T-cell (primary cell): ENCODE measurements at regions of chr1 and their contacts with region 1.

Region 1: GRCh38 chr1:38012363-38013226 is at the start of gene UTP11:
- DNase-seq: peak; percentile 77 to 96 (median 89)
- ATAC-seq: peak; percentile 90 to 96 (median 94)
- H3K4me3 ChIP-seq: peak within 1 kb of the TSS; percentile 89 to 94
- H3K4me3 Mint-ChIP-seq: peak within 1 kb of the TSS; percentile 99 to 100 (median 100)
- H3K27ac ChIP-seq: peak within 1 kb of the TSS; percentile 73
- H3K27ac Mint-ChIP-seq: peak within 1 kb of the TSS; percentile 98
- H3K4me1 ChIP-seq: peaks cover 16 to 49% of the 10 kb centered on the region in 2 experiments
- H3K4me1 Mint-ChIP-seq: peaks cover 42 to 63% (median 61%) of the 10 kb centered on the region in 3 donors
- H3K27me3 ChIP-seq: no peaks in the 10 kb centered on the region
- H3K27me3 Mint-ChIP-seq: no peaks in the 10 kb centered on the region
- total RNA-seq, gene UTP11: 8.5 to 18.3 (median 15.9) TPM

Region 2: DNA sequence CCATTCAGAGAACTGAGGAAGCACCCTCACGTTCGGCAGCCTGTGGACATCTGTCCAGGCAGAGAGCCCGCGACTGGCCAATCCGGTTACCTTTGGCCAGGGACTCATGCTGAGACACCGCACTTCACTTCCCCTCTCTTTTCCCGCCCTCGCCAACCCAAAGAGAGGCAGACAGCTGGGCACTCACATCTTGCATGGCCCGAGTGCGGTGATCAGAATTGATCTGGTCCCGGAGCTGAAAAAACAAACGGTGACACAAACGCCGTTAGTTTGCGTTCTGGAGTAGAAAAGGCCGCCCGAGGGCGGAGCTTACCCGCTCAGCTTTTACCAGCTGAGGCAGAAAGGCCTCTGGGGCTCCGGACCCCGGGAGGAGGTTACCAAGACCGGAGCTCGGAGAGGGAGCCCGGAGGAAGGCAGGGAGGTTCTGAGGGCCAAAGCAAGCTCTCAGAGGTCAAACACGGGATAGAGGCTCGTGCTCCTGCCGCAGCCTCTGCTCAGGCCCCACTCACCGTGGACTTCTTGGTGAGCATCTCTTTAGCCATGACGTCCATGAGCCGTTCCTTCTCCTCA is 23.1 kb before region 1 on chr1:
- CTCF ChIA-PET with region 1: interaction called in 1 of 2 experiments, 10 read pairs
- POLR2A ChIA-PET with region 1: no interaction called
- DNase-seq: peak in 15 of 35 experiments; percentile 18 to 55 (median 29)
- ATAC-seq: peak; percentile 40 to 54 (median 47)
- H3K4me3 ChIP-seq: peak overlapping the region; percentile 87
- H3K4me3 Mint-ChIP-seq: peak overlapping the region; percentile 87 to 100 (median 98)
- H3K27ac ChIP-seq: peak overlapping the region; percentile 35
- H3K27ac Mint-ChIP-seq: peak overlapping the region; percentile 94 to 95
- H3K4me1 ChIP-seq: peaks cover 2 to 14% of the 10 kb centered on the region in 2 experiments
- H3K4me1 Mint-ChIP-seq: peaks cover 18 to 28% (median 26%) of the 10 kb centered on the region in 3 donors
- H3K27me3 ChIP-seq: no peaks in the 10 kb centered on the region
- H3K27me3 Mint-ChIP-seq: no peaks in the 10 kb centered on the region